HCT116 (cell line): ENCODE measurements at regions of chr19 and their contacts with region 1.

Region 1: GRCh38 chr19:2391118-2391725 is 31.2 kb downstream of the TMPRSS9 start:
- DNase-seq: peak; percentile 66
- ATAC-seq: peak; percentile 78
- H3K4me3 ChIP-seq: no peak overlapping the region
- H3K27ac ChIP-seq: no peak overlapping the region
- H3K4me1 ChIP-seq: peaks cover 0 to 13% of the 10 kb centered on the region in 2 experiments; a peak in 2 of 4 replicates
- H3K27me3 ChIP-seq: no peaks in the 10 kb centered on the region
- CTCF ChIP-seq: peak; percentile 75 to 81 (median 80); a peak in 5 of 6 replicates
- POLR2A ChIP-seq: no peak
- RAD21 ChIP-seq: peak; percentile 88

Region 2: DNA sequence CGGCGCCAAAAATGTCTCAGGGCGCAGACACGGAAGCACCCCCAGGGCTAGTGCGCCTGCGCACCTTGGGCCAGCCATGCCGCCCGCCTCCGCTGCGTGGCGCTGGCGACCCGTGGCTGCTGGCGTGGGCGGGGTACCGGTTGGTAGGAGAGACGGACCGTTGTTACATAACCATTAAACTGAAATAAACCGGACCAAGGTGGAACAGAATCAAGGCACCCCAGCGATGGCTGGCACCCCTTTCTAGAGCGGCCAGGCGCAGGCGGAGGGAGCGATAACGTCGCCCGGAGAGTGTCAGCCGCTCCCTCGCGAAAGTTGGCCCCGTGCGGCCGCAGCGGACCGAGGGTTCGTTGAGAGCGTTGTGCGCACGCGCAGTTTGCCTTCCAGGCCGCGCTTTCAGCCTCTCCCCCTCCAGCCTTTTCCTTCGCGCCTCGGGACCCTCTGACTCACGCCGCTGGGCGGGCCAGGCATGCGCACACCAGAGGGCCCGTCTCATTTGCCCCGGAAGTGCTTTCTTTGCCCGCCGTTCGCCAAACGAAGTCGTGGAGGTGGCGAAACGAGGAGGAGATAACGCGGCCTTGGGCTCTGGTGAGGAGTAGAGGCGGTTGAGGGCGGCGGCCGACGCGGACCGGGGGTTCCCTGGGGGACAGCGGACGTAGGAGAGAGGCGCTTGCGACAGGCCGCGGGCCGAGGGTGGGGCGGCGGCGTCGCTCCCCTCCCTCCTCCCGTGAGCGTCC is 154.7 kb before region 1 on chr19 and contains the starts of genes PLEKHJ1 and SF3A2:
- CTCF ChIA-PET with region 1: no interaction called
- POLR2A ChIA-PET with region 1: no interaction called
- RAD21 ChIA-PET with region 1: no interaction called
- intact Hi-C with region 1: loop called (anchors 1 kb)
- DNase-seq: peak; percentile 94
- ATAC-seq: peak; percentile 77
- H3K4me3 ChIP-seq: peak within 1 kb of the TSS; percentile 83 to 92
- H3K27ac ChIP-seq: peak within 1 kb of the TSS; percentile 95
- H3K4me1 ChIP-seq: peaks cover 17 to 49% of the 10 kb centered on the region in 2 experiments; a peak in 3 of 4 replicates
- H3K27me3 ChIP-seq: no peaks in the 10 kb centered on the region
- CTCF ChIP-seq: peak; percentile 87 to 98 (median 96)
- POLR2A ChIP-seq: peak; percentile 82
- RAD21 ChIP-seq: peak; percentile 97
- total RNA-seq, gene PLEKHJ1: 88.2 TPM
- total RNA-seq, gene SF3A2: 166 TPM

Region 3: GRCh38 chr19:2274931-2275535 is 116.2 kb before region 1 on chr19:
- CTCF ChIA-PET with region 1: no interaction called
- POLR2A ChIA-PET with region 1: interaction called, 3 read pairs
- RAD21 ChIA-PET with region 1: interaction called in 1 of 2 experiments, 4 read pairs
- intact Hi-C with region 1: loop called (anchors 1 kb)
- DNase-seq: no peak
- ATAC-seq: peak; percentile 68
- H3K4me3 ChIP-seq: no peak overlapping the region
- H3K27ac ChIP-seq: peak overlapping the region; percentile 24; the same call in 1 of the 2 replicates
- H3K4me1 ChIP-seq: peaks cover 9 to 52% of the 10 kb centered on the region in 2 experiments
- H3K27me3 ChIP-seq: no peaks in the 10 kb centered on the region
- CTCF ChIP-seq: peak; percentile 58 to 78 (median 69)
- POLR2A ChIP-seq: no peak
- RAD21 ChIP-seq: peak; percentile 88

Region 4: GRCh38 chr19:2328401-2329148 is 62.6 kb before region 1 on chr19 and contains the starts of genes LSM7 and SPPL2B:
- CTCF ChIA-PET with region 1: no interaction called
- POLR2A ChIA-PET with region 1: no interaction called
- RAD21 ChIA-PET with region 1: no interaction called
- intact Hi-C with region 1: loop called (anchors 5 kb)
- DNase-seq: peak; percentile 63
- ATAC-seq: peak; percentile 77
- H3K4me3 ChIP-seq: peak within 1 kb of the TSS; percentile 96
- H3K27ac ChIP-seq: peak within 1 kb of the TSS; percentile 98
- H3K4me1 ChIP-seq: peaks cover 19 to 28% of the 10 kb centered on the region in 2 experiments
- H3K27me3 ChIP-seq: no peaks in the 10 kb centered on the region
- CTCF ChIP-seq: no peak
- POLR2A ChIP-seq: peak; percentile 70
- RAD21 ChIP-seq: no peak
- total RNA-seq, gene LSM7: 190 TPM
- total RNA-seq, gene SPPL2B: 83.1 TPM

Region 5: GRCh38 chr19:2416321-2417097 is 25.3 kb after region 1 on chr19:
- CTCF ChIA-PET with region 1: no interaction called
- POLR2A ChIA-PET with region 1: no interaction called
- RAD21 ChIA-PET with region 1: no interaction called
- intact Hi-C with region 1: no loop called
- DNase-seq: no peak
- ATAC-seq: peak; percentile 20; the same call in 1 of the 2 replicates
- H3K4me3 ChIP-seq: no peak overlapping the region
- H3K27ac ChIP-seq: no peak overlapping the region
- H3K4me1 ChIP-seq: no peaks in the 10 kb centered on the region
- H3K27me3 ChIP-seq: no peaks in the 10 kb centered on the region
- CTCF ChIP-seq: no peak
- POLR2A ChIP-seq: no peak
- RAD21 ChIP-seq: no peak